Activated naive CD4-positive, alpha-beta T cell treated with anti-CD3 and anti-CD28 coated beads for 36 hours (primary cell): ENCODE measurements at regions of chr18 and their contacts with region 1.

Region 1: DNA sequence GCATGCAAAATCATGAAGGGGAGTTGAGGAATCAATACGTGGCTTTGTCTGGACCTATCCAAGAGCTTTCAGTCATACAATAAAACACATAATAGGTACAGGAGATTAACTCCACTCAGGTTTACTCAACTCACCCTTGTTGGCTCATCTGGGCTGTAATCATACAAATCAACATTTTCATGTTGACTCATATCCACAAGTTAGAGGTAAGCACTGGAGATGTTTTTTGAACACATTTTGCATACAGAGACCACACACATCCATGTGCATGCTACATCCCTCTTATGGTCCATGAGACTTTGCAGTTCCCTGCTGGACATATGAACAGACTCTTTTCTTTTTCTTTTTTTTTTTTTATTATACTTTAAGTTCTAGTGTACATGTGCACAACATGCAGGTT is 336.9 kb upstream of the PIK3C3 start:
- DNase-seq: no peak
- H3K4me3 Mint-ChIP-seq: no peak overlapping the region
- H3K27ac Mint-ChIP-seq: no peak overlapping the region
- H3K4me1 Mint-ChIP-seq: no peaks in the 10 kb centered on the region
- H3K27me3 Mint-ChIP-seq: no peaks in the 10 kb centered on the region

Region 2: DNA sequence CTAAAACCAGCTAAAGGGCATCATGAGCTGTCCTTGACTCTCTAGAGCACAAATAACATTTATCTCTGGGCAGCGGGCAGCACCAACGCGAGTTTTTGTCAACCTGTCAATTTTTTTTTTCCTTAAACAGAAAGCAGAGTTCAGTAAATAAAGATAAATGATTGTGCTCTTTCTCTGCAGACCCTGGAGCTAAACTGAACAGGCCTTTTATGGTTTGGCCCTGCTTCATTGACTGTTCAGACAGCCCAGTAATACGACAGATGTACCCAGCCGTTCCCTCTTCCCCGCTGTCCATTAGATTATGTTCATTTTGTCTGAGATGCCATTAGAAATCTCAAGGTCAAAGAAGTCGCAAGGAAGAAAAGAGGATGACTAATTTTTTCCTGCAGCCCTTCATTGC is 56.4 kb after region 1 on chr18:
- CTCF ChIA-PET with region 1: no interaction called
- intact Hi-C with region 1: loop called (anchors 10 kb)
- DNase-seq: no peak
- H3K4me3 Mint-ChIP-seq: no peak overlapping the region
- H3K27ac Mint-ChIP-seq: no peak overlapping the region
- H3K4me1 Mint-ChIP-seq: no peaks in the 10 kb centered on the region
- H3K27me3 Mint-ChIP-seq: no peaks in the 10 kb centered on the region